ENCODE measurements at regions of chr5 and their contacts with region 1.

Region 1: GRCh38 chr5:111512375-111513130 is at the start of gene STARD4:
- DNase-seq: peak; percentile 92
- ATAC-seq: peak; percentile 88
- H3K4me3 ChIP-seq: peak within 1 kb of the TSS; percentile 85
- H3K27ac ChIP-seq: peak within 1 kb of the TSS; percentile 97
- H3K4me1 ChIP-seq: 0 out of 2 replicates have a peak, but pooled peaks cover under 1% of the 10 kb centered on the region
- H3K27me3 ChIP-seq: no peaks in the 10 kb centered on the region
- CTCF ChIP-seq: no peak
- EP300 ChIP-seq: 0 out of 4 replicates have a peak, but pooled peaks of 1 of the 2 experiments have one; percentile 6
- POLR2A ChIP-seq: peak; percentile 99
- RAD21 ChIP-seq: no peak
- polyA plus RNA-seq, gene STARD4: 41.9 to 53.3 TPM

Region 2: GRCh38 chr5:110738812-110739651 is 773.5 kb before region 1 on chr5 and contains the start of gene SLC25A46:
- CTCF ChIA-PET with region 1: no interaction called
- POLR2A ChIA-PET with region 1: no interaction called
- RAD21 ChIA-PET with region 1: no interaction called
- SMC1A ChIA-PET with region 1: no interaction called
- in situ Hi-C with region 1: loop called (anchors 25 kb)
- intact Hi-C with region 1: no loop called
- DNase-seq: peak; percentile 56
- ATAC-seq: peak; percentile 91
- H3K4me3 ChIP-seq: peak within 1 kb of the TSS; percentile 75
- H3K27ac ChIP-seq: peak within 1 kb of the TSS; percentile 90
- H3K4me1 ChIP-seq: 0 out of 2 replicates have a peak, but pooled peaks cover 3% of the 10 kb centered on the region
- H3K27me3 ChIP-seq: no peaks in the 10 kb centered on the region
- CTCF ChIP-seq: no peak
- EP300 ChIP-seq: no peak
- POLR2A ChIP-seq: peak; percentile 99
- RAD21 ChIP-seq: no peak
- polyA plus RNA-seq, gene SLC25A46: 18.0 to 31.0 TPM

Region 3: GRCh38 chr5:111223889-111224563 is 288.5 kb before region 1 on chr5 and contains the start of gene CAMK4:
- CTCF ChIA-PET with region 1: no interaction called
- POLR2A ChIA-PET with region 1: interaction called, 7 read pairs
- RAD21 ChIA-PET with region 1: interaction called, 5 read pairs
- SMC1A ChIA-PET with region 1: interaction called, 4 read pairs
- in situ Hi-C with region 1: no loop called
- intact Hi-C with region 1: loop called (anchors 5 kb)
- DNase-seq: no peak
- ATAC-seq: peak; percentile 79
- H3K4me3 ChIP-seq: peak within 1 kb of the TSS; percentile 83
- H3K27ac ChIP-seq: peak within 1 kb of the TSS; percentile 85
- H3K4me1 ChIP-seq: peaks cover 12% of the 10 kb centered on the region
- H3K27me3 ChIP-seq: no peaks in the 10 kb centered on the region
- CTCF ChIP-seq: peak; percentile 12 to 35 (median 32); a peak in 2 of 6 replicates
- EP300 ChIP-seq: no peak
- POLR2A ChIP-seq: peak; percentile 67
- RAD21 ChIP-seq: peak; percentile 36
- polyA plus RNA-seq, gene CAMK4: 13.3 to 15.0 TPM

Region 4: GRCh38 chr5:111478266-111478665 is 34.3 kb before region 1 on chr5:
- CTCF ChIA-PET with region 1: no interaction called
- POLR2A ChIA-PET with region 1: no interaction called
- RAD21 ChIA-PET with region 1: interaction called, 6 read pairs
- SMC1A ChIA-PET with region 1: interaction called, 11 read pairs
- in situ Hi-C with region 1: no loop called
- intact Hi-C with region 1: no loop called
- DNase-seq: no peak
- ATAC-seq: no peak
- H3K4me3 ChIP-seq: no peak overlapping the region
- H3K27ac ChIP-seq: no peak overlapping the region
- H3K4me1 ChIP-seq: no peaks in the 10 kb centered on the region
- H3K27me3 ChIP-seq: no peaks in the 10 kb centered on the region
- CTCF ChIP-seq: peak in 1 of 3 experiments; percentile 15; a peak in 1 of 6 replicates
- EP300 ChIP-seq: no peak
- POLR2A ChIP-seq: no peak
- RAD21 ChIP-seq: peak; percentile 50

Region 5: DNA sequence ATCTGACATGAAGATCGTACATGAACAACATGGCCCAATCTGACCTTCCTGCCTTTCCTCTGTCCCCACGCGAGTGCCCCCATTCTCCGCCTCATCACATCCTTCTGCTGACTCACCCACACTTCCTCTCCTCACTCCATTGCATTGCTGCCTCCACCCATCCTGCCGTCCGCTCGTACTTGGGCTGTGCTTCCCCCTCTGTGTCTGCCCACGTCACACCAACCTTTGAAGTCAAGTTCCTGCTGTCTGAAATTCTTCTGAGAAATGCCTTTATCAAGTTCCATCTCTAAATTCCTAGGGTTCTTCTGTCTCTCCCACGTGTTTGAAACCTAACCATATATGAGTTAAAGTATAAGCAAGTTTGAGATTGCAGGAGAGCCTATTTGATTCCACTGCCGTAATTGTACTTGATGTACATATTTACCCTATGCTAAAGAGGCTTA is 17.8 kb after region 1 on chr5:
- CTCF ChIA-PET with region 1: interaction called, 80 read pairs
- POLR2A ChIA-PET with region 1: interaction called, 6 read pairs
- RAD21 ChIA-PET with region 1: interaction called, 5 read pairs
- SMC1A ChIA-PET with region 1: interaction called, 49 read pairs
- in situ Hi-C with region 1: no loop called
- intact Hi-C with region 1: no loop called
- DNase-seq: peak; percentile 57
- ATAC-seq: peak; percentile 98
- H3K4me3 ChIP-seq: no peak overlapping the region
- H3K27ac ChIP-seq: peak overlapping the region; percentile 37; the same call in 1 of the 2 replicates
- H3K4me1 ChIP-seq: peaks cover 4% of the 10 kb centered on the region
- H3K27me3 ChIP-seq: no peaks in the 10 kb centered on the region
- CTCF ChIP-seq: no peak
- EP300 ChIP-seq: no peak
- POLR2A ChIP-seq: peak; percentile 39; the same call in 1 of the 2 replicates
- RAD21 ChIP-seq: no peak

Region 6: GRCh38 chr5:112958093-112959088 is 1445.8 kb after region 1 on chr5:
- CTCF ChIA-PET with region 1: no interaction called
- POLR2A ChIA-PET with region 1: no interaction called
- RAD21 ChIA-PET with region 1: no interaction called
- SMC1A ChIA-PET with region 1: no interaction called
- in situ Hi-C with region 1: loop called (anchors 25 kb)
- intact Hi-C with region 1: no loop called
- DNase-seq: peak; percentile 57
- ATAC-seq: peak; percentile 83
- H3K4me3 ChIP-seq: 0 out of 2 replicates have a peak overlapping the region, but pooled peaks have one; percentile 25
- H3K27ac ChIP-seq: no peak overlapping the region; the same call in 1 of the 2 replicates
- H3K4me1 ChIP-seq: peaks cover 29% of the 10 kb centered on the region
- H3K27me3 ChIP-seq: no peaks in the 10 kb centered on the region
- CTCF ChIP-seq: no peak
- EP300 ChIP-seq: no peak
- POLR2A ChIP-seq: no peak
- RAD21 ChIP-seq: no peak